ENCODE measurements at regions of chr1 and their contacts with region 1.

Region 1: GRCh38 chr1:172002725-172003345 is 161.5 kb downstream of the DNM3 start:
- DNase-seq: peak; percentile 74
- H3K4me3 ChIP-seq: no peak overlapping the region
- H3K27ac ChIP-seq: no peak overlapping the region
- H3K4me1 ChIP-seq: peaks cover 8% of the 10 kb centered on the region
- H3K27me3 ChIP-seq: no peaks in the 10 kb centered on the region
- CTCF ChIP-seq: peak; percentile 46 to 58
- POLR2A ChIP-seq: no peak

Region 2: DNA sequence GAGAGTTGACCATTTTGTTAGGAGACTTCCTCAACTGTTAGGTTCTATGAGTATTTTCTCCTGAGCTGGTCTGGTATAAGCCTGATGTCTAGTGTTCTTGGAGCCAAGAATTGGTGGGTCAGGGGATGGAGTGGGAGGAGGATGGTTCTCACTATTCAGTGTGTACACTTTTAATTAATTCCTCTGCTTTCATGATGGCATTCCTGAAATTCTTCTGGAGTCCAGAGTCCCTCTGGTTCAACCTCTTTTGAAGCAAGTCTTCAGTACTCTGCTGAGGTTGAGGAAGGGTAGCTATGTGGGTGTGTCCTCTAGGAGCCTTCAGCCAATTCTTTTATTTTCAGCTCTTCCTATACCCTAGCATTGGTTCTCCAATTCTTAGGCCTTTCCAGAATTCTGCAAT is 12.5 kb before region 1 on chr1:
- CTCF ChIA-PET with region 1: interaction called, 18 read pairs
- POLR2A ChIA-PET with region 1: no interaction called
- dilution Hi-C with region 1: no loop called
- intact Hi-C with region 1: no loop called
- DNase-seq: no peak
- H3K4me3 ChIP-seq: no peak overlapping the region
- H3K27ac ChIP-seq: no peak overlapping the region
- H3K4me1 ChIP-seq: no peaks in the 10 kb centered on the region
- H3K27me3 ChIP-seq: no peaks in the 10 kb centered on the region
- CTCF ChIP-seq: no peak
- POLR2A ChIP-seq: no peak

Region 3: DNA sequence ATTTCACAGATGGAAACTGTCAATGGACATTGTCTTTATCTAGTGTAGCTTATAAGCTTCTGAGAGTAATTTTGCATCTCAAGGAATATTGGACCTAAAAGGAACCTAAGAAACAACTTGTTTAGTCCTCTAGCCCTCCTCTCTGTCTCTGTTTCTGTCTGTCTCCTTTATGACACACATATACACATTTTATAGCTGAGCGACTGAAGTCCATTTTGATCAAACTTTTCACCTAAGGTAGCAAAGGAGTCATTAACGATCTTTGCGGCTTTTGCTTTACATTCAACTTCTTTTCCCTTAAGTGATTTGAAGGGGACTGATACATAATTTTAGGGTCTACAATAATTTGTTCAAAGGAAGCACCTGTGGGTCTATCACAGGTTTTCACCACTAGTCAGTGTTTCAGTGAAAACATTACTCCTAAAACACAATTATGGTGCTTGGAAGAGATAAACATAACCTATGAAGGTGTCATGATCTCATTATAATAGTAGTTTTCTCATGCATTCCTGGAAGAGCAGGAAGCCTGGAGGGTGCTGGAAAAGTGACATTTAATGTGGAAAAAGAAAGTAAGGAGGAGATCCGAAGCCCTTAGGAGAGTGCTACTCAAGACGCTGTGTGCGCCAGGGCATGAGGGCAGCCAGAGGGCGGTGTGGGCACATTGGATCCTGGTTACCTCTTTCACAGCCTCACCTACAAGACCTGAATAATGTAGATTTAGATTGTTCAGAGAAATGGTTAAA is 87.1 kb after region 1 on chr1:
- CTCF ChIA-PET with region 1: interaction called, 9 read pairs
- POLR2A ChIA-PET with region 1: no interaction called
- dilution Hi-C with region 1: no loop called
- intact Hi-C with region 1: loop called (anchors 2 kb)
- DNase-seq: peak; percentile 67
- H3K4me3 ChIP-seq: no peak overlapping the region
- H3K27ac ChIP-seq: no peak overlapping the region
- H3K4me1 ChIP-seq: no peaks in the 10 kb centered on the region
- H3K27me3 ChIP-seq: no peaks in the 10 kb centered on the region
- CTCF ChIP-seq: peak; percentile 59 to 67
- POLR2A ChIP-seq: no peak

Region 4: GRCh38 chr1:172254521-172255222 is 251.8 kb after region 1 on chr1:
- CTCF ChIA-PET with region 1: interaction called, 19 read pairs
- POLR2A ChIA-PET with region 1: no interaction called
- dilution Hi-C with region 1: no loop called
- intact Hi-C with region 1: loop called (anchors 2 kb)
- DNase-seq: peak; percentile 72
- H3K4me3 ChIP-seq: no peak overlapping the region
- H3K27ac ChIP-seq: peak overlapping the region; percentile 99
- H3K4me1 ChIP-seq: peaks cover 20% of the 10 kb centered on the region
- H3K27me3 ChIP-seq: no peaks in the 10 kb centered on the region
- CTCF ChIP-seq: no peak
- POLR2A ChIP-seq: no peak

Region 5: GRCh38 chr1:172275463-172275862 is 272.6 kb after region 1 on chr1:
- CTCF ChIA-PET with region 1: no interaction called
- POLR2A ChIA-PET with region 1: no interaction called
- dilution Hi-C with region 1: no loop called
- intact Hi-C with region 1: no loop called
- DNase-seq: no peak
- H3K4me3 ChIP-seq: no peak overlapping the region
- H3K27ac ChIP-seq: no peak overlapping the region
- H3K4me1 ChIP-seq: no peaks in the 10 kb centered on the region
- H3K27me3 ChIP-seq: no peaks in the 10 kb centered on the region
- CTCF ChIP-seq: no peak
- POLR2A ChIP-seq: no peak

Region 6: GRCh38 chr1:172417552-172417951 is 414.7 kb after region 1 on chr1:
- CTCF ChIA-PET with region 1: interaction called, 13 read pairs
- POLR2A ChIA-PET with region 1: no interaction called
- dilution Hi-C with region 1: loop called (anchors 25 kb)
- intact Hi-C with region 1: no loop called
- DNase-seq: no peak
- H3K4me3 ChIP-seq: no peak overlapping the region
- H3K27ac ChIP-seq: no peak overlapping the region
- H3K4me1 ChIP-seq: no peaks in the 10 kb centered on the region
- H3K27me3 ChIP-seq: no peaks in the 10 kb centered on the region
- CTCF ChIP-seq: no peak
- POLR2A ChIP-seq: no peak

Region 7: DNA sequence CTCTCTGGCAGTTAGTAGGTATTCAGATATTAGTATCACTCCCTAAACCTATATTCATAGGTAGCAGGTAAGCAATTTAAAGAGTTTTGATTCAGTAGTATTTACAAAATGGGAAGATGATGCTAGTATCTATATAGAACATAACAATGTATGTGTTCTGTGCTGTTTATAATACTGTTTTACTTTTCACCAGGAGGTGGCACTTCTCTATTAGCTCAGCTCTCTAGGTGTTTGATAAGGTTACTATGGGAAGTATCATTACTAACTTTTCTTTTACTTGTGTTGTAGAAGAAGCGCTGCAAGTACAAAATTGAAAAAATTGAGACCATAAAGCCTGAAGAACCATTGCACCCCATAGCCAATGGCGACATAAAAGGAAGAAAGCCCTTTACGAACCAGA is 606.7 kb after region 1 on chr1:
- CTCF ChIA-PET with region 1: interaction called, 11 read pairs
- POLR2A ChIA-PET with region 1: no interaction called
- dilution Hi-C with region 1: no loop called
- intact Hi-C with region 1: no loop called
- DNase-seq: no peak
- H3K4me3 ChIP-seq: no peak overlapping the region
- H3K27ac ChIP-seq: no peak overlapping the region
- H3K4me1 ChIP-seq: peaks cover 5% of the 10 kb centered on the region
- H3K27me3 ChIP-seq: no peaks in the 10 kb centered on the region
- CTCF ChIP-seq: peak in 1 of 2 donors; percentile 17
- POLR2A ChIP-seq: no peak

Measured in endothelial cell of umbilical vein (primary cell).